ENCODE measurements at regions of chr7 and their contacts with region 1.

Region 1: DNA sequence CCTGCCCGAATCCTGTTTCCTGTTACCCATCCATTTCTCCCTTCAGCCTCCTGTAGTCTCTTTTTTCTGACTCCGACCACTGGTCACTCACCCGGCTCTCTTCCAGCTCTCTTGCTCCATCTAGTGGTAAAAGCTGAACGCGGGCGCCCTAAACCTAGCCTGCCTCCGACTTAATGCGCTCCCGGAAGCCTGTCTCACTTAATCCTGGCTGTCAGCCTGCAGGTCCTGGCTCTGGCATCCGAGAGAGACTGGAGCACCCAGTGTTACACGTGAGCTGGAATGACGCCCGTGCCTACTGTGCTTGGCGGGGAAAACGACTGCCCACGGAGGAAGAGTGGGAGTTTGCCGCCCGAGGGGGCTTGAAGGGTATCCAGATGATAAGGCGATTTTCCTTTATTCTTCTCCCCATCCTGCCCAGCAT is 10.3 kb downstream of the SUMF2 start:
- DNase-seq: peak; percentile 54 to 82
- ATAC-seq: peak; percentile 98
- H3K4me3 ChIP-seq: no peak overlapping the region
- H3K27ac ChIP-seq: peak overlapping the region in 1 of 2 experiments; percentile 40; a peak in 1 of 6 replicates
- H3K4me1 ChIP-seq: 0 out of 3 replicates have a peak, but pooled peaks cover 3% of the 10 kb centered on the region
- CTCF ChIP-seq: peak; percentile 78
- EP300 ChIP-seq: no peak
- POLR2A ChIP-seq: no peak
- RAD21 ChIP-seq: peak; percentile 89 to 92

Region 2: GRCh38 chr7:55641273-55641691 is 433.1 kb before region 1 on chr7:
- CTCF ChIA-PET with region 1: interaction called, 28 read pairs
- POLR2A ChIA-PET with region 1: no interaction called
- DNase-seq: peak; percentile 41 to 81
- ATAC-seq: peak; percentile 93 to 95
- H3K4me3 ChIP-seq: no peak overlapping the region
- H3K27ac ChIP-seq: no peak overlapping the region
- H3K4me1 ChIP-seq: no peaks in the 10 kb centered on the region
- CTCF ChIP-seq: peak; percentile 73
- EP300 ChIP-seq: no peak
- POLR2A ChIP-seq: no peak
- RAD21 ChIP-seq: peak; percentile 86 to 93

Region 3: DNA sequence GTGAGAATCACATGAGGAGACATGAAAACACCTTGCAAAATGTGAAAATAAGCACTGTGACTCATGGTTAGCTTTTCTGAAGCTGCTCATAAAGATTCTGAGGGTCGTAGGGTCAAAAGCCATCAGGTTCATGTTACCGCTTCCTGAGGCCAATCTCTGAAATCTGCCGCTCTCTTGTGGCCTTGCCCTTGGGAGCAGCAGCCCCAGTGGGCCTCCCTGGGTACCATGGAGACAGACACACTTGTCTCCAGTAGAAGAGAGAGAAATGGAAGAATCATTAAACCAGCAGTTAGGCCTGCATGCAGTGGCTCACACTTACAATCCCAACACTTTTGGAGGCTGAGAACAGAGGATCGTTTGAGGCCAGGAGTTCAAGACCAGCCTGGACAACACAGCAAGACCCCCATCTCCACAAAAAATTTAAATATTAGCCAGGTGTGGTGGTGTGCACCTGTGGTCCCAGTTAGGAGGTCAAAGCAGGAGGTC is 67.2 kb before region 1 on chr7:
- CTCF ChIA-PET with region 1: interaction called, 37 read pairs
- POLR2A ChIA-PET with region 1: no interaction called
- DNase-seq: peak in 1 of 2 experiments; percentile 26
- ATAC-seq: peak in 1 of 2 experiments; percentile 56; a peak in 3 of 6 replicates
- H3K4me3 ChIP-seq: no peak overlapping the region
- H3K27ac ChIP-seq: peak overlapping the region in 1 of 2 experiments; percentile 38; a peak in 1 of 6 replicates
- H3K4me1 ChIP-seq: peaks cover 16% of the 10 kb centered on the region
- CTCF ChIP-seq: no peak
- EP300 ChIP-seq: no peak
- POLR2A ChIP-seq: no peak
- RAD21 ChIP-seq: no peak

Region 4: GRCh38 chr7:56063882-56064625 is 10.3 kb before region 1 on chr7 and contains the start of gene SUMF2:
- CTCF ChIA-PET with region 1: interaction called, 15 read pairs
- POLR2A ChIA-PET with region 1: interaction called, 3 read pairs
- DNase-seq: peak; percentile 92 to 98
- ATAC-seq: peak; percentile 95 to 96
- H3K4me3 ChIP-seq: peak within 1 kb of the TSS; percentile 81
- H3K27ac ChIP-seq: peak within 1 kb of the TSS; percentile 91 to 94
- H3K4me1 ChIP-seq: peaks cover 54% of the 10 kb centered on the region
- CTCF ChIP-seq: no peak
- EP300 ChIP-seq: 0 out of 5 replicates have a peak, but pooled peaks of 1 of the 2 experiments have one; percentile 21
- POLR2A ChIP-seq: peak; percentile 96
- RAD21 ChIP-seq: no peak
- polyA plus RNA-seq, gene SUMF2: 85.2 TPM in 2 replicates

Region 5: DNA sequence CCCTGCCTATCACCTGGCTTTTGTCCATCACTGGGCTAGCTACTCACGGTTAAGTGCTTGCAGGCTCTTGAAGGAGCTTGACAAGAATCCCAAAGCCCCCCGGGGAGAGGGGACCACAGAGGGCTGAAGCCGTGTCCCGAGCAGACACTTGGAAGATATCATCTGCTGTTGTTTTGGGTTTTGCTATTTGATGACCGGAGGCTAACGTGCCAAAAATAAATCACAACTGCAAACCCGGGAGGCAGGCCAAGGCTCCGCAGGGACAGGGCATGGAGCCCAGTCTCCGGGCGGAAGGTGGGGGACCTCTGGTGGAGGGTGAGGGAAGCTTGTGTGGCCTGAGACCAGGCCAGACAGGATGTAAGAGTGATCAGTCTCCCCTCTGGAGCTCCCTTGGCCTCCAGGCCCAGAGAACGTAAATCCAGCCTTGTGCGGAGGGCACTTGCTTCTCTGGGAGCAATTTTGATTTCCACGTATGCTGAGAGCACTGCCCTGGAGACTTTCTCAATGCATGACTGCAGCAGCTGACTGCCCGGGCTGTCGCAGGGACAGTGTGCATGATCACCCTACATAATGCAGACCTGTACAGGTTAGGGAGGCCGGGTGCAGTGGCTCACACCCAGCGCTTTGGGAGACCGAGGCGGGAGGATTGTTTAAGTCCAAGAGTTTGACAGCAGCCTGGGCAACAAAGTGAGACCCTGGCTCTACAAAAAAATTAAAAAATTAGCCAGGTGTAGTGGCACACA is 18.6 kb after region 1 on chr7 and contains the start of gene PHKG1:
- CTCF ChIA-PET with region 1: interaction called, 20 read pairs
- POLR2A ChIA-PET with region 1: no interaction called
- DNase-seq: peak; percentile 56 to 58
- ATAC-seq: peak; percentile 93 to 95
- H3K4me3 ChIP-seq: no peak within 1 kb of the TSS
- H3K27ac ChIP-seq: peak within 1 kb of the TSS in 1 of 2 experiments; percentile 29; a peak in 1 of 6 replicates
- H3K4me1 ChIP-seq: peaks cover 10% of the 10 kb centered on the region; the same call in 2 of the 3 replicates
- CTCF ChIP-seq: peak; percentile 56
- EP300 ChIP-seq: no peak
- POLR2A ChIP-seq: no peak
- RAD21 ChIP-seq: peak; percentile 32 to 60; a peak in 4 of 5 replicates
- polyA plus RNA-seq, gene PHKG1: 0.41 and 0.44 TPM in 2 replicates

Region 6: DNA sequence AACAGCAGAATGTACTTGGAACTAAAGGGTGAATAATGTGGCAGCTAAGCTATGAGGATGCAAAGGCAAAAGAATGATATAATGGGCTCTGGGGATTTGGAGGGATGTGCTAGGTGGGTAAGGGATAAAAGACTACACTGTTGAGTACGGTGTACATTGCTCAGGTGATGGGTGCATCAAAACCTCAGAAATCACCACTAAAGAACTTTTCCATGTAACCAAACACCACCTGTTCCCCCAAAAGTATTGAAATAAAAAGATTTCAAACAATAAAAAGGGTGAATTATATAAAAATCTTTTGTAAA is 33.5 kb after region 1 on chr7:
- CTCF ChIA-PET with region 1: no interaction called
- POLR2A ChIA-PET with region 1: no interaction called
- DNase-seq: no peak
- ATAC-seq: no peak
- H3K4me3 ChIP-seq: no peak overlapping the region
- H3K27ac ChIP-seq: no peak overlapping the region
- H3K4me1 ChIP-seq: peaks cover 5% of the 10 kb centered on the region; the same call in 2 of the 3 replicates
- CTCF ChIP-seq: no peak
- EP300 ChIP-seq: no peak
- POLR2A ChIP-seq: no peak
- RAD21 ChIP-seq: no peak

Region 7: DNA sequence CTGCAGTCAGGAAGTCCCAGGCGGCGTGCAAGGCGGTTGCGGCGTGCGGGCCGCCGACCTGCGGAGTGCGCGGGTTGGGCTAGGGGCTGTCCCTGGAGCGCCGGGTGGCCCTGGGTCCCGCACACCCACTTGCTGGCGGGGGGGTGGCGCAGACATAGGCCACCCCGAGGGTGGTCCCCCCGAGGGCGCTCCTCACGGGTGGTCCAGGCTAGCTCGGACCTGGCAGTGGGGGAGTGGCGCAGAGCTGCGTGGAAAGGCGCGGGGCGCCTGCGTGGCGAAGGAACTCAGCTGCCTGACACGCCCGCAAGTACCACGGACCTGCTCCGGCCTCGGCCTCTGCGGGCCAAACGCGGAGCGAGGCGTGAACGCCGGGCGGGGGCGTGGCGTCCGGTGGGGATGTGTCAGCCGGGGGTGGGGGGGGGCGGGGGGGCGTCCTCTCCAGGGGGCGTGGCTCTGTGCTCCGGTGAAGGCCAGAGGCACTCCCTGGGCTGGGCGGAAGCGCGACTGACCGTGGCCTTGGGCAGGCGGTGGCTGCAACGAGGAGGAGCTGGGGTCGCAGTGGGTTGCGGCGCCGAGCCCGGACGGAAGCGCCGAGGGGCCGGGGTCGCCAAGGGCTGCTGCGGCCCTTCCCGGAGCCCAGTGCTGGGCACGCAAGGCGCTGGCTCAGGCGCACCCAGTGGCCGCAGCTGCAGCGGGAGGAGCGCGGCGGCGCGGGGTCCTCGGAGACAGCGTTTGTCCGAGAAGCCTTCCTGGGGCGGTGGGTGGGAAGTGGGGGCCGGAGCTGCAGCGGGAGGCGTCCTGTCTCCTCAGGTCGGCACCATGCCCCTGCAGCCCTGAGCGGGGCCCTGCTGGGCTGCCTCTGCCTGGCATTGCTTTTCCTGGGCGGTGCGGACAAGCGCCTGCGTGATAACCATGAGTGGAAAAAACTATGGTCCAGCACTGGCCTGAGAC is 100.7 kb after region 1 on chr7:
- CTCF ChIA-PET with region 1: no interaction called
- POLR2A ChIA-PET with region 1: no interaction called
- DNase-seq: no peak
- ATAC-seq: no peak
- H3K4me3 ChIP-seq: no peak overlapping the region
- H3K27ac ChIP-seq: no peak overlapping the region
- H3K4me1 ChIP-seq: no peaks in the 10 kb centered on the region
- CTCF ChIP-seq: no peak
- EP300 ChIP-seq: no peak
- POLR2A ChIP-seq: no peak
- RAD21 ChIP-seq: no peak